ENCODE measurements at regions of chr20 and their contacts with region 1.

Region 1: GRCh38 chr20:59455402-59456341 is 148.7 kb upstream of the PHACTR3 start:
- DNase-seq: peak; percentile 33
- ATAC-seq: peak; percentile 64 to 81; a peak in 5 of 6 replicates
- H3K4me3 ChIP-seq: no peak overlapping the region
- H3K27ac ChIP-seq: no peak overlapping the region
- H3K4me1 ChIP-seq: no peaks in the 10 kb centered on the region
- CTCF ChIP-seq: peak; percentile 84
- EP300 ChIP-seq: no peak
- POLR2A ChIP-seq: no peak
- RAD21 ChIP-seq: peak; percentile 87 to 89

Region 2: GRCh38 chr20:58864350-58864749 is 591.3 kb before region 1 on chr20:
- CTCF ChIA-PET with region 1: interaction called, 56 read pairs
- POLR2A ChIA-PET with region 1: no interaction called
- DNase-seq: no peak
- ATAC-seq: peak; percentile 57 to 77; a peak in 3 of 6 replicates
- H3K4me3 ChIP-seq: no peak overlapping the region
- H3K27ac ChIP-seq: no peak overlapping the region
- H3K4me1 ChIP-seq: no peaks in the 10 kb centered on the region
- CTCF ChIP-seq: peak; percentile 40
- EP300 ChIP-seq: no peak
- POLR2A ChIP-seq: no peak
- RAD21 ChIP-seq: peak; percentile 59 to 63

Region 3: GRCh38 chr20:58875541-58876134 is 580.0 kb before region 1 on chr20:
- CTCF ChIA-PET with region 1: interaction called, 56 read pairs
- POLR2A ChIA-PET with region 1: no interaction called
- DNase-seq: no peak
- ATAC-seq: no peak
- H3K4me3 ChIP-seq: no peak overlapping the region
- H3K27ac ChIP-seq: no peak overlapping the region
- H3K4me1 ChIP-seq: no peaks in the 10 kb centered on the region
- CTCF ChIP-seq: no peak
- EP300 ChIP-seq: no peak
- POLR2A ChIP-seq: no peak
- RAD21 ChIP-seq: no peak

Region 4: GRCh38 chr20:59222253-59223181 is 233.2 kb before region 1 on chr20:
- CTCF ChIA-PET with region 1: interaction called, 11 read pairs
- POLR2A ChIA-PET with region 1: no interaction called
- DNase-seq: peak; percentile 77
- ATAC-seq: peak; percentile 92 to 99
- H3K4me3 ChIP-seq: peak overlapping the region; percentile 51
- H3K27ac ChIP-seq: peak overlapping the region; percentile 81 to 91
- H3K4me1 ChIP-seq: peaks cover 6% of the 10 kb centered on the region; the same call in 2 of the 3 replicates
- CTCF ChIP-seq: peak; percentile 90
- EP300 ChIP-seq: no peak
- POLR2A ChIP-seq: no peak
- RAD21 ChIP-seq: peak; percentile 80 to 92

Region 5: GRCh38 chr20:59441860-59442845 is 13.5 kb before region 1 on chr20:
- CTCF ChIA-PET with region 1: interaction called, 19 read pairs
- POLR2A ChIA-PET with region 1: interaction called, 4 read pairs
- DNase-seq: no peak
- ATAC-seq: no peak
- H3K4me3 ChIP-seq: no peak overlapping the region
- H3K27ac ChIP-seq: no peak overlapping the region
- H3K4me1 ChIP-seq: no peaks in the 10 kb centered on the region
- CTCF ChIP-seq: no peak
- EP300 ChIP-seq: no peak
- POLR2A ChIP-seq: no peak
- RAD21 ChIP-seq: no peak

Region 6: DNA sequence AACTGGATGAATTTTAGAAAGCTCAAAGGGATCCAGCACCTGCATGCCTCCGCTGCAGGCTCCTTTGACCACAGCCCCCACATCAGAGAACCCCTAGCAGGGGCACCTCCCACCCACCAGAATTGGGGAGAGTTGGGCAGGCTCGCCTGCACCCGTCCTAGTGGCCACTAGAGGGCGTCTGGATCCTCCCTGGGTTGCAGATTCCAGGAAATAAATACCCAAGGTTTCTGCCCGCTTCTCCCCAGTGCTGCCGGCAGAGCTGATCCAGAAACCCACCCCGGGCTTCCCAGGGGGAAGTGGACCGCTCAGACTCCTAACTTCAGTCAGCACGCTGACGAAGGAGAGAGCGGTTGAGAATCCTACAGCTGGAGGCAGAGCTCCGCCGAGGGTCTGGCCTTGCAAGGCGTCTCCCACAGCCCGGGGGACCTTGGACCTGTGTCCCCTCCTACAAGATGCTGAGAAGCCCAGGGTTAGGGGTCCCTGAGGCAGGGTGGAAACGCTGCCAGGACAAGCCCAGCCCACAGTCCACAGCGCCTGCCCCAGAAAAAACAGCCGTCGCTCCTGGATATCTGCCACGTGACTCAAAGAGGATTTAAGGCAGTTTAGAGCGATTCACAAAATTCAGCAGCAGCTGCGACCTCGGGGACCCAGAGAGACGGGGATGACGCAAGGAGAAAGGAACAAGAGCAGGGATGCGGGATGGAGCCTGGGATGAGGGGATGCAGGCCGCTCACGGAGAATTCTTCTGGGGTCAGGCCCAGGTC is 116.1 kb after region 1 on chr20:
- CTCF ChIA-PET with region 1: no interaction called
- POLR2A ChIA-PET with region 1: no interaction called
- DNase-seq: peak; percentile 41 to 69
- ATAC-seq: peak; percentile 70 to 89
- H3K4me3 ChIP-seq: no peak overlapping the region
- H3K27ac ChIP-seq: no peak overlapping the region
- H3K4me1 ChIP-seq: no peaks in the 10 kb centered on the region
- CTCF ChIP-seq: peak; percentile 84
- EP300 ChIP-seq: no peak
- POLR2A ChIP-seq: no peak
- RAD21 ChIP-seq: peak; percentile 43 to 45; a peak in 3 of 5 replicates